Activated B cell treated with CpG ODN at 0.5 μM for 24 hours (primary cell): ENCODE measurements at regions of chr14 and their contacts with region 1.

Region 1: DNA sequence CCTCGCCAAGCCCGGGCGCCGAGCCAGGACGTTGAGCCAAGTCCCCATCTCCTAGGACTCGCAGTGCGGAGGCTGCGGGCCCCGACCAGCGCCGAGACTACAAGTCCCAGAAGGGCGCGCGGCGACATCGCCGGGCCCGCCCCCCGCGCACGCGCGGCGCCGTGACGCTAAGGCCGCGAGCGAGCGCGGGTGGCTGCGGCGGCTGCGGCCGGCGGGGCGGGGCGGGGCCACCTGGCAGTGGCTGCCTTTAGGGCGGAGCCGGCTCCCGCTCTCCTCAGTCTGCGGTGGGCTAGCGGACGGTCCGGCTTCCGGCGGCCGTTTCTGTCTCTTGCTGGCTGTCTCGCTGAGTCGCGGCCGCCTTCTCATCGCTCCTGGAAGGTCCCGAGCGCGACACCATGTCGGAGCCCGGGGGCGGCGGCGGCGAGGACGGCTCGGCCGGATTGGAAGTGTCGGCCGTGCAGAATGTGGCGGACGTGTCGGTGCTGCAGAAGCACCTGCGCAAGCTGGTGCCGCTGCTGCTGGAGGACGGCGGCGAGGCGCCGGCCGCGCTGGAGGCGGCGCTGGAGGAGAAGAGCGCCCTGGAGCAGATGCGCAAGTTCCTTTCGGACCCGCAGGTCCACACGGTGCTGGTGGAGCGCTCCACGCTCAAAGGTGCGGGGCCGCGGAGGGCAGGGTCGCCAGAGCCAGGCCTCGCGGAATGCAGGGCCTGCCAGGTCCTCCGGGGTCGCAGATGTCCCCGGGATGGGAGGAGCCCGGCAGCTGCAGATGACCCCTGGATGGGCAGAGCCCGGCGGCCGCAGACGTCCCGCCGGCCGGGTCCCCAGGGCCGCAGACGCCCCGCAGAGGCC is at the start of gene DYNC1H1:
- DNase-seq: peak; percentile 92
- ATAC-seq: peak; percentile 87
- H3K4me3 Mint-ChIP-seq: peak within 1 kb of the TSS; percentile 92
- H3K27ac Mint-ChIP-seq: peak within 1 kb of the TSS; percentile 93
- H3K4me1 Mint-ChIP-seq: peaks cover 43% of the 10 kb centered on the region
- H3K27me3 Mint-ChIP-seq: no peaks in the 10 kb centered on the region
- CTCF ChIP-seq: no peak
- total RNA-seq, gene DYNC1H1: 208 and 236 TPM in 2 replicates

Region 2: DNA sequence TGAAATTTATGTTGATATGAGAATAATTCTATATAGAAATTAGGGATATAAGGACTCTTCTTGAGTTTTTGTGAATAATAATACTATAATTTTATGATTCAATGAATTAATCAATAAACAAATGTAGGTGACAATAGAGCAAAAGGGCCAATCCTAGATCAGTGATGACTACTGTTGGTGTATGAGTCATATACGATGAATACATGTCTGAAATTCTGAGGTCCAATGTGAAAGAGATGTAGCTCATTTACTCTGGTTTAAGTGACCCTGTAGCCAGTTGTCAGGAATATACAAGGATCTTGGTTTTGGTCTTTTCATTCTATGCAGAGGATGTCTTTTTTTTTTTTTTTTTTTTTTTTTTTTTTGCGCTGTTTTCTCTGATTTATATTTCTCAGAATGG is 988.9 kb before region 1 on chr14:
- CTCF ChIA-PET with region 1: no interaction called
- POLR2A ChIA-PET with region 1: no interaction called
- intact Hi-C with region 1: no loop called
- DNase-seq: no peak
- ATAC-seq: no peak
- H3K4me3 Mint-ChIP-seq: no peak overlapping the region
- H3K27ac Mint-ChIP-seq: no peak overlapping the region
- H3K4me1 Mint-ChIP-seq: no peaks in the 10 kb centered on the region
- H3K27me3 Mint-ChIP-seq: no peaks in the 10 kb centered on the region
- CTCF ChIP-seq: no peak

Region 3: GRCh38 chr14:101707068-101707842 is 257.3 kb before region 1 on chr14:
- CTCF ChIA-PET with region 1: interaction called, 3 read pairs
- POLR2A ChIA-PET with region 1: interaction called, 4 read pairs
- intact Hi-C with region 1: loop called (anchors 1 kb)
- DNase-seq: peak; percentile 30
- ATAC-seq: peak; percentile 70
- H3K4me3 Mint-ChIP-seq: peak overlapping the region; percentile 46
- H3K27ac Mint-ChIP-seq: peak overlapping the region; percentile 31
- H3K4me1 Mint-ChIP-seq: peaks cover 22% of the 10 kb centered on the region
- H3K27me3 Mint-ChIP-seq: peaks cover 3% of the 10 kb centered on the region
- CTCF ChIP-seq: peak; percentile 65

Region 4: GRCh38 chr14:101843665-101844064 is 120.9 kb before region 1 on chr14:
- CTCF ChIA-PET with region 1: interaction called, 4 read pairs
- POLR2A ChIA-PET with region 1: interaction called, 4 read pairs
- intact Hi-C with region 1: loop called (anchors 1 kb)
- DNase-seq: peak; percentile 48
- ATAC-seq: peak; percentile 79
- H3K4me3 Mint-ChIP-seq: peak overlapping the region; percentile 76
- H3K27ac Mint-ChIP-seq: peak overlapping the region; percentile 94
- H3K4me1 Mint-ChIP-seq: peaks cover 83% of the 10 kb centered on the region
- H3K27me3 Mint-ChIP-seq: no peaks in the 10 kb centered on the region
- CTCF ChIP-seq: peak; percentile 26

Region 5: DNA sequence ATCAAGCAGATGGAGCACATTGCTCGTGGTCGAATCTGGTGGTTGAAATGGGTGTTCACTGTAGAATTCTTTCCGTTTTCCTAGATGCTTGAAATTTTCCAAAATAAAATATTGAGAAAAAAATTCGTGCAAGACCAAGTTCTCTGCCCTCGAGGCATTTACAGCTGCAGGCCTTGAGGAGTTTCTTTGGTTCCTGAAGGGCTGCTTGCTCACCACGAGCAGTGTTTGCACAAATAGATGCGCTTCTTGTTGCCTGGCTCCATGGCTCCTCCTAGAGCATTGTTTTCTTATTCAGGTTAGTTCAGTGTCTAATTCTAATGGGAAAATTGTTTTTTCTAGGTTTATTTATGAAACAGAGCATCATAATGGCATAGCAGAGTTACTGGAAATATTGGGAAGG is 74.6 kb before region 1 on chr14:
- CTCF ChIA-PET with region 1: no interaction called
- POLR2A ChIA-PET with region 1: no interaction called
- intact Hi-C with region 1: no loop called
- DNase-seq: no peak
- ATAC-seq: no peak
- H3K4me3 Mint-ChIP-seq: no peak overlapping the region
- H3K27ac Mint-ChIP-seq: peak overlapping the region; percentile 35
- H3K4me1 Mint-ChIP-seq: no peaks in the 10 kb centered on the region
- H3K27me3 Mint-ChIP-seq: no peaks in the 10 kb centered on the region
- CTCF ChIP-seq: no peak

Region 6: DNA sequence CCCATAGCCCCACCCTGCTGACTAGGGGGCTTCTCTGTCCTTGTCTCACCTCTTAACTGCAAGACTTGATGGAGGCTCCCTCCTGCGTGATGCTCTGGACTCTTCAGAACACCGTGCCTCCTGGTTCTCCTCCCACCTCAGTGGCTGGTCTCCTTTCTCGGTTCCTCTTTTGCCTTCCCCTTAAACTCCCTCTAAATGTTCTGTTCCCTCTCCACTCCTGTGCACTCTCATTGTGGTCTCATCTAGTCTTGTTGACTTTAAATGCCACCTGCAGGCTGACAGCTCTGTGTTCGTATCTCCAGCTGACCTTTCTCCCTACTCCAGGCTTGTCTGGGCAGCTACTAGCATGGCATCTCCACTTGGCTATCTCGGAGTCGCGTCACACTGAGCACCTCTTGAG is 28.2 kb after region 1 on chr14:
- CTCF ChIA-PET with region 1: interaction called, 16 read pairs
- POLR2A ChIA-PET with region 1: interaction called, 3 read pairs
- intact Hi-C with region 1: loop called (anchors 1 kb)
- DNase-seq: peak; percentile 25
- ATAC-seq: peak; percentile 95
- H3K4me3 Mint-ChIP-seq: no peak overlapping the region
- H3K27ac Mint-ChIP-seq: peak overlapping the region; percentile 59
- H3K4me1 Mint-ChIP-seq: peaks cover 23% of the 10 kb centered on the region
- H3K27me3 Mint-ChIP-seq: no peaks in the 10 kb centered on the region
- CTCF ChIP-seq: no peak

Region 7: GRCh38 chr14:102139248-102140026 is 174.9 kb after region 1 on chr14 and contains the start of gene WDR20:
- CTCF ChIA-PET with region 1: no interaction called
- POLR2A ChIA-PET with region 1: interaction called, 3 read pairs
- intact Hi-C with region 1: loop called (anchors 1 kb)
- DNase-seq: peak; percentile 99
- ATAC-seq: peak; percentile 94
- H3K4me3 Mint-ChIP-seq: peak within 1 kb of the TSS; percentile 97
- H3K27ac Mint-ChIP-seq: peak within 1 kb of the TSS; percentile 93
- H3K4me1 Mint-ChIP-seq: peaks cover 19% of the 10 kb centered on the region
- H3K27me3 Mint-ChIP-seq: no peaks in the 10 kb centered on the region
- CTCF ChIP-seq: no peak
- total RNA-seq, gene WDR20: 41.1 and 42.3 TPM in 2 replicates

Region 8: GRCh38 chr14:102430212-102430908 is 465.8 kb after region 1 on chr14:
- CTCF ChIA-PET with region 1: no interaction called
- POLR2A ChIA-PET with region 1: no interaction called
- intact Hi-C with region 1: no loop called
- DNase-seq: no peak
- ATAC-seq: no peak
- H3K4me3 Mint-ChIP-seq: no peak overlapping the region
- H3K27ac Mint-ChIP-seq: no peak overlapping the region
- H3K4me1 Mint-ChIP-seq: no peaks in the 10 kb centered on the region
- H3K27me3 Mint-ChIP-seq: no peaks in the 10 kb centered on the region
- CTCF ChIP-seq: no peak

Region 9: DNA sequence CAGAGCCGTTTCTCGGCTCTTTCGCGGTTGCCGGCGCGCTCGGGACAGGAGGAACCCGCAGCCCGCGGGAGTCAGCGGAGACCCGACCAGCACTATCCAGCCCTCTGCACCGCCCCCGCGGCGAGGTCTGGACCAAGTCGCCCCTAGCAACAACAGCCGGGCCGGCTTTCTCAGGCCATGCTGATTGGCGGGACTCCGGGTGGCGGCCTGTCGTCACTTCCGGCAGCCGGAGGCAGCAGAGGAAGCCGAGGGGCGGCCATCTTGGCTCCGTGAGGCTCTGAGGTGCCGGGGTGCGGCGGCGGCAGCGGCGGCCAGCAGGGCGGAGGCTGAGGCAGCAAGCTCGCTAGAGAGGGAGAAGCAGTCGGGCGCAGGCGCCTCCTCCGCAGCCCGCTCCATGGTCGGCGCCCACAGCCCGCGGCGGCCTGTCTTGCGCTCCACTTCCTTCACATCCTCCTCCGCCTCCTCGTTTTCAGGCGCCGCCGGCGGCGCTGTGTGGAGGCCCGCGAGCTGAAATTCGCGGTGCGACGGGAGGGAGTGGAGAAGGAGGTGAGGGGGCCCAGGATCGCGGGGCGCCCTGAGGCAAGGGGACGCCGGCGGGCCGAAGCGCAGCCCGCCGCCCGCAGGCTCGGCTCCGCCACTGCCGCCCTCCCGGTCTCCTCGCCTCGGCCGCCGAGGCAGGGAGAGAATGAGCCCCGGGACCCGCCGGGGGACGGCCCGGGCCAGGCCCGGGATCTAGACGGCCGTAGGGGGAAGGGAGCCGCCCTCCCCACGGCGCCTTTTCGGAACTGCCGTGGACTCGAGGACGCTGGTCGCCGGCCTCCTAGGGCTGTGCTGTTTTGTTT is 1420.9 kb after region 1 on chr14 and contains the start of gene MARK3:
- CTCF ChIA-PET with region 1: no interaction called
- POLR2A ChIA-PET with region 1: no interaction called
- intact Hi-C with region 1: loop called (anchors 5 kb)
- DNase-seq: peak; percentile 93
- ATAC-seq: peak; percentile 90
- H3K4me3 Mint-ChIP-seq: peak within 1 kb of the TSS; percentile 97
- H3K27ac Mint-ChIP-seq: peak within 1 kb of the TSS; percentile 93
- H3K4me1 Mint-ChIP-seq: peaks cover 45% of the 10 kb centered on the region
- H3K27me3 Mint-ChIP-seq: peaks cover 2% of the 10 kb centered on the region
- CTCF ChIP-seq: no peak
- total RNA-seq, gene MARK3: 97.1 and 110 TPM in 2 replicates